Psoas muscle (tissue), 8 donors: ENCODE measurements at regions of chr6 and their contacts with region 1.

Region 1: GRCh38 chr6:25793970-25794369 is 37.9 kb downstream of the SLC17A1 start:
- DNase-seq: no peak
- ATAC-seq: no peak
- H3K4me3 ChIP-seq: no peak overlapping the region
- H3K27ac ChIP-seq: no peak overlapping the region
- H3K4me1 ChIP-seq: no peaks in the 10 kb centered on the region
- H3K27me3 ChIP-seq: peaks cover 0 to 2% (median 0%) of the 10 kb centered on the region in 3 donors
- CTCF ChIP-seq: no peak

Region 2: GRCh38 chr6:25675167-25675566 is 118.8 kb before region 1 on chr6:
- intact Hi-C with region 1: no loop called
- DNase-seq: no peak
- ATAC-seq: no peak
- H3K4me3 ChIP-seq: no peak overlapping the region
- H3K27ac ChIP-seq: no peak overlapping the region
- H3K4me1 ChIP-seq: no peaks in the 10 kb centered on the region
- H3K27me3 ChIP-seq: no peaks in the 10 kb centered on the region
- CTCF ChIP-seq: no peak

Region 3: DNA sequence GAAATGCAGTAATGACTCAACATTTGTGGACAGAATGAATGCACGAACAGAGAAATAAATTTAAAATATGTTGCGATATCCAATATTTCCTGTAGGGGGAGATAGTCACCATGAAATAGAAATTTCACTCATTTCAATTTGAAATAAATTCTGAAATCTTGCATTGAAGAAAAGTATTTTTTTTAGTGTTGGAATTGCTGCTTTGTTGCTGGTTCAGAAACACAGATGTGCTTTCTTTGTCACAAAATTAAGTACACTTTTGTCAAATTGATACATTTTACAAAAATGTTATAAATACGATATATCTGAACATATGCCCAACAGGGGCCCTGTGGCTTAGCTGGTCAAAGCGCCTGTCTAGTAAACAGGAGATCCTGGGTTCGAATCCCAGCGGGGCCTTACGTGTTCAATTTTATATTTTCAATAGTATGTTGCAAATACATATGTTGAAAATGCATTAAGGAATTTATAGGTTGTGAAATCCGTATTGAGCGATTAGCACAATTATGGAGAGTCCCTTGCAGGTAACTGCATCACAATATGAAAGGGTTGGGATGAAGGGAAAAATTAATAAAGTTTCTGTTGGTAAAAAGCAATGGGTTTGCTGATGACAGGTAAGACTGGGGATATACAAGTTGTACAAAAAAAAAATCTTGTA is 1368.1 kb after region 1 on chr6:
- intact Hi-C with region 1: loop called in 1 of 2 experiments (anchors 10 kb)
- DNase-seq: no peak
- ATAC-seq: no peak
- H3K4me3 ChIP-seq: no peak overlapping the region
- H3K27ac ChIP-seq: no peak overlapping the region
- H3K4me1 ChIP-seq: peaks cover 5% of the 10 kb centered on the region
- H3K27me3 ChIP-seq: no peaks in the 10 kb centered on the region
- CTCF ChIP-seq: peak; percentile 80